ENCODE measurements at regions of chr2 and their contacts with region 1.

Region 1: GRCh38 chr2:10700078-10700803 is 10.5 kb upstream of the NOL10 start:
- DNase-seq: no peak
- ATAC-seq: no peak

Region 2: GRCh38 chr2:9074930-9075329 is 1625.3 kb before region 1 on chr2:
- intact Hi-C with region 1: loop called (anchors 5 kb)
- DNase-seq: no peak
- ATAC-seq: no peak

Region 3: DNA sequence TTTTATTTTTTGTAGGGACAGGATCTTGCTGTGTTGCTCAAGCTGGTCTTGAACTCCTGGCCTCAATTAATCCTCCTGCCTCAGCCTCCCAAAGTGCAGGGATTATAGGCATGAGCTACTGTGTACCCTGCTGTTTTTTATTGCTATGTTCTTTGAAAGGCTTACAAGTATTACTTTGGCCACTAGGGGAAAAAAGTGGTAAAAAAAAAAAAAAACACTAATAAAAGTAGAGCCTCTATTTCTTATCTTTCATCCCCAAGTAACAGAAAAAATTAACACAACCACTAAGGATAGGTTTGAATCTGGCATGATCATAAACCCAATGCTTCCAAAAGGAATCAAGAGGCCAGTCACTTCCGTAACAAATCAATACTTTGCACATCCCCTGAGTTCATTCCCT is 22.0 kb before region 1 on chr2:
- intact Hi-C with region 1: no loop called
- DNase-seq: no peak
- ATAC-seq: no peak